ENCODE measurements at regions of chr2 and their contacts with region 1.

Region 1: DNA sequence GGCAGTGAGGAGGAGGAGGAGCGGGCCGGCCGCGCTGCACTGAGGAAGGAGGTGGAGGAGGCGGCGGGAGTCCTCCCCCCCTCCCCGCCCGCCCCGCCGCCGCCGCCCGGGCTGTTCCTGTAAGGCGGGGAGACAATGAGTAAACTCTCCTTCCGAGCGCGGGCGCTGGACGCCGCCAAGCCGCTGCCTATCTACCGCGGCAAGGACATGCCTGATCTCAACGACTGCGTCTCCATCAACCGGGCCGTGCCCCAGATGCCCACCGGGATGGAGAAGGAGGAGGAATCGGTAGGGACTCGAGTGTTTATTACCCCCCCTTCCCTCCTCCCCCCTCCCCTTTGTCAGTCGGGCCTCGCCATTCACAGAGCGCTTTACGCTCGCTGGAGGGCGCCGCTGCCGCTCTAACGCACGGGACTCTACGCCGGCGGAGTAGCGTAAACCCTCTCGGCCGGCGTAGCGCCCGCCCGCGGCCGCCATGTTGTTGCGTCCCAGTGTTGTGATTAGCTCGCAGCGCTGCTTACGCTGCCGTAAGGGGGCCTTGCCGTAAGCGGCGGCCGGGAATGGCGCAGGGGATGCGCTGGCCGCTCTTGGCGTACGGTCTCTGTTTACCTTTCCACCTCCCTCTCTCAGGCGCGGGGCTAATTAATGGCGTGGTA is 460 bp downstream of the EPC2 start:
- DNase-seq: peak; percentile 96
- ATAC-seq: peak; percentile 78
- H3K4me3 Mint-ChIP-seq: peak overlapping the region; percentile 98
- H3K27ac Mint-ChIP-seq: peak overlapping the region; percentile 92
- H3K4me1 Mint-ChIP-seq: peaks cover 27% of the 10 kb centered on the region
- H3K27me3 Mint-ChIP-seq: peaks cover 5% of the 10 kb centered on the region

Region 2: DNA sequence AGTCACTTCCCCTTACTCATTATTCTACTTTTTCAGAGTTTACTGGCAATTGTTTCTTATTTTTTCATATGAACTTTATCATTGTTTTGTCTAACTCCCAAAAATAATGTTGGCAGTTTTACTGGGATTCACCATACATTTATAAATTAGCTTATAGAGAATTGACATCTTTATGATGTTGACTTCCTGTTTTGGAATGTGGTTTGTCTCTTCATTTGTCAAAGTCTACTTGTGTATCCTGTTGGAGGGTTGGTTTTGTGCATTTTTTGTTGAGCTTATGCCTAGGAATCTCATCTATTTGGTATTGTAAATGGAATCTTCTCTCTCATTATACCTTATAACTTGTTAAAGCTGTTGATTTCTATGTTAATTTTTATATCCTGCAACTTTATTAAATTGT is 16.0 kb after region 1 on chr2:
- POLR2A ChIA-PET with region 1: interaction called, 13 read pairs
- DNase-seq: no peak
- ATAC-seq: no peak
- H3K4me3 Mint-ChIP-seq: no peak overlapping the region
- H3K27ac Mint-ChIP-seq: no peak overlapping the region
- H3K4me1 Mint-ChIP-seq: peaks cover 36% of the 10 kb centered on the region
- H3K27me3 Mint-ChIP-seq: no peaks in the 10 kb centered on the region